Activated T-helper 2 cell treated with anti-CD3 and anti-CD28 coated beads, Interferon-gamma antibody, Interleukin-2, Interleukin-4, amounts not matched to agents 10 μg/mL and 5 μg/mL and 100 μg/mL, durations not matched to agents 14 hours and 24 hours and 36 hours (primary cell): ENCODE measurements at regions of chr22 and their contacts with region 1.

Region 1: GRCh38 chr22:38506118-38506962 is at the start of gene DDX17:
- DNase-seq: peak; percentile 94
- H3K4me3 Mint-ChIP-seq: peak within 1 kb of the TSS; percentile 99
- H3K27ac Mint-ChIP-seq: peak within 1 kb of the TSS; percentile 100
- H3K4me1 Mint-ChIP-seq: peaks cover 36% of the 10 kb centered on the region
- H3K27me3 Mint-ChIP-seq: no peaks in the 10 kb centered on the region
- total RNA-seq, gene DDX17: 378 and 391 TPM in 2 replicates

Region 2: GRCh38 chr22:38305471-38306448 is 200.6 kb before region 1 on chr22:
- intact Hi-C with region 1: no loop called
- DNase-seq: no peak
- H3K4me3 Mint-ChIP-seq: no peak overlapping the region
- H3K27ac Mint-ChIP-seq: peak overlapping the region; percentile 64
- H3K4me1 Mint-ChIP-seq: peaks cover 15% of the 10 kb centered on the region
- H3K27me3 Mint-ChIP-seq: no peaks in the 10 kb centered on the region

Region 3: DNA sequence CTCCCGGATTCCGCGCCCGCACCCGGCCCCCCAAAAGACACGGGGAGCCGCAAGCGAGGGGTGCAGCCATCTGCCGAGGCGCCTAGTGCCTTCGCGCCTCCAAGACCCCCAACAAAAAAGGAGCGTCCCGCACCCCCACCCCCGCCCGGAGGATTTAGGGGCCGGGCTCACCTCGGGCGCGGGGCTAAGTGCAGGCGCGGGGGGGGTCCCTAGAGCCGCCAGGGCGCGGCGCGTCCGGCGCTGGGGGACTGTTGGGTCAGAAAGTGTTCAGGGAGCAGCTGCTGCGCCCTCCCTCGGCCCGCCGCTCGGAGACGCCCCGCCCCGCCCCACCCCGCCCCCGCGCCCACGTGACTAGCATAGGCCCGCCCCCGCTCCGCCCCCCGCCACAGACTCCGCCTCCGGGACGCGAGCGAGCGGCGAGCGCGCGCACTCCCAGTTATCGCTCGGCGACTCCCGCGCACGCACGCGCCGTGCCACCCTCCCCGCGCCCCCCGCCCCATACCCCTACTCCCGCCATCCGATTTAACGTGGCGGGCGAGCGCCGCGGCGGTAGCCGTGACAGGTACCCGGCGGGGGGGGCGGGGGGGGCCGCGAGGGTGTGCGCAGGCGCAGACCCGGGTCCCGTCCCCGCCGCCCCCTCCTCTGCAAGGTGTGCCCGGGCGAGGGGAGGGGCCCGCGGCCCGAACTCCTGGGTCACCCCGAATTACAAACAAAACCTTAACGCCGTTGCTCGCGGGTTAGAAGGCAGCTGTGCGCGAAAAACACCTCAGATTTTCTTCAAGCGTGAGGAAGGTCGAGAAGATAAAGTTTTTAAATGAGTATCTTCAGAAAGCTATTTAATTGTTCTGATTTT is 107.5 kb before region 1 on chr22:
- intact Hi-C with region 1: loop called (anchors 5 kb)
- DNase-seq: peak; percentile 75
- H3K4me3 Mint-ChIP-seq: peak overlapping the region; percentile 82
- H3K27ac Mint-ChIP-seq: no peak overlapping the region
- H3K4me1 Mint-ChIP-seq: peaks cover 40% of the 10 kb centered on the region
- H3K27me3 Mint-ChIP-seq: peaks cover 21% of the 10 kb centered on the region

Region 4: GRCh38 chr22:38461414-38462081 is 44.8 kb before region 1 on chr22:
- intact Hi-C with region 1: no loop called
- DNase-seq: peak; percentile 63
- H3K4me3 Mint-ChIP-seq: no peak overlapping the region
- H3K27ac Mint-ChIP-seq: no peak overlapping the region
- H3K4me1 Mint-ChIP-seq: no peaks in the 10 kb centered on the region
- H3K27me3 Mint-ChIP-seq: peaks cover 85% of the 10 kb centered on the region

Region 5: GRCh38 chr22:38490915-38491314 is 15.4 kb before region 1 on chr22:
- intact Hi-C with region 1: loop called (anchors 1 kb)
- DNase-seq: no peak
- H3K4me3 Mint-ChIP-seq: no peak overlapping the region
- H3K27ac Mint-ChIP-seq: peak overlapping the region; percentile 51
- H3K4me1 Mint-ChIP-seq: peaks cover 43% of the 10 kb centered on the region
- H3K27me3 Mint-ChIP-seq: no peaks in the 10 kb centered on the region